ENCODE measurements at regions of chr11 and their contacts with region 1.

Region 1: DNA sequence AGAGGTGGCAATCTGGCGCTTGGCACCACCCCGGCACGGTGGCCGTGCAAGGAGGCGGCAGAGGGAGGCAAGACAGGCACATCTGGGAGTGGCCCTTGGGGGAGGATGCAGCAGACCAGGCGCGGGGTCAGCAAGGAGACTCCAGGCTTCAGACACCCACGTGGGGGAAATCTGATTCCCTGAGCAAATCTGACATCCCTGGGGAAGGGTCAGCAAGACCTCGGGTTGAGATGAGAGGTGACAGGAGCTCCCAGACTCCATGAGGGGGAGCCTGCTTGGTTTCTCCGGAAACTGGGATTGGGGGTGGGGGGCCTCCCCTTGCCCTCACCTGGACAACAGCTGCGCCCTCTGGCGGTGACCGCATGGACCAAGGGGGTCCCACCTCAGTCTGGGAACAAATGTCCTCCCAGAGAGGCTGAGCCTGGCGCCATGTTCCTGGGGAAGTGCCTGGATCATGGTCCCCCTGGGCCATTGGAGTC is 4.0 kb upstream of the RCOR2 start:
- DNase-seq: peak; percentile 71
- CTCF ChIP-seq: peak; percentile 72

Region 2: GRCh38 chr11:63933459-63933858 is 12.5 kb after region 1 on chr11:
- CTCF ChIA-PET with region 1: interaction called, 14 read pairs
- POLR2A ChIA-PET with region 1: no interaction called
- DNase-seq: no peak
- CTCF ChIP-seq: no peak

Region 3: DNA sequence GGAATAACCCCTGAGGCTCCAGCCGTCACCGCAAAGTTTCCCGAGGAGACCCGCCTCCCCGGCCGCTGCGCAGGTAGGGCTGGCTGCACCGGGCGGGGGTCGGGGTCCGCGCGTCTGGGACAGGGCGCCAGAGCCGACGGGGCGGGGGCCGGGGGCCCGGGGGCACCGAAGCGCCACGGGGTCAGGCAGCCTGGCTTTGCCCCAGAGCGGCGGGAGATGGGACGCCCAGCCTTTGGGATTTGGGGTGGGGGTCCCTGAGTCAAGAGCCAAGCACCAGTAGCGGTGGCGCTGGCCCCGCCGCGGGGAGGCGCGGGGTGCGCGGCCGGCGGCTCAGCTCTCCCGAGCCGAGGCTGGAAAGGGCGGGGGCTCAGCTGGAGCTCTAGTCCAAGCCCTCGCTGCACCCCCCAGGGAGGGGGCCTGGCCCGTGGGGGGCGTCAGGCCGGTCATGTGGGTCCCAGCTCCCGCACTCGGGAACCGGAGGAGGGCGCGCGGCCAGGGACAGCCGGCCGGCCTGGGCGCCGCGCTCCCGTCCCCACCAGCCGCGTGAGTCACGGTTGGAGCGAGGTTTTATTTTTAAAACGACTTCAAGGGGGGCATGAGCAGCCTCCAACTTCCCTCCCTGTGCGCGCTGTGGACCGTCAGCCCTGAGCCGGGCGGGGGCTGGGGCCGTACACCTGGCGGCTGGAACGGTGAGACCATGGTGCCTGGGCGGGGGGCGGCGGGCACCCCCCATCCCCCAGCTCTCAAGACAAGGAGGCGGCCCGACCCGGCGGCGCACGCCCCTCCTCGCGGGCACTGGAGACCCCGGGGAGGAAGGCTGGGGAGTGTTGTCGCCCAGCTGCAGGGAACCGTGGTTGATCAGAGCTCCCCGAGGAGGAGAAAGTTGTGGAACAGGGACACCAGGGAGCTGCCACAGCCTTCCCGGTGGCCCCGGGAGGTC is 115.4 kb after region 1 on chr11:
- CTCF ChIA-PET with region 1: no interaction called
- POLR2A ChIA-PET with region 1: no interaction called
- DNase-seq: no peak
- CTCF ChIP-seq: no peak

Measured in GM10248 (cell line).